Gastrocnemius medialis (tissue), 4 donors: ENCODE measurements at regions of chr17 and their contacts with region 1.

Region 1: DNA sequence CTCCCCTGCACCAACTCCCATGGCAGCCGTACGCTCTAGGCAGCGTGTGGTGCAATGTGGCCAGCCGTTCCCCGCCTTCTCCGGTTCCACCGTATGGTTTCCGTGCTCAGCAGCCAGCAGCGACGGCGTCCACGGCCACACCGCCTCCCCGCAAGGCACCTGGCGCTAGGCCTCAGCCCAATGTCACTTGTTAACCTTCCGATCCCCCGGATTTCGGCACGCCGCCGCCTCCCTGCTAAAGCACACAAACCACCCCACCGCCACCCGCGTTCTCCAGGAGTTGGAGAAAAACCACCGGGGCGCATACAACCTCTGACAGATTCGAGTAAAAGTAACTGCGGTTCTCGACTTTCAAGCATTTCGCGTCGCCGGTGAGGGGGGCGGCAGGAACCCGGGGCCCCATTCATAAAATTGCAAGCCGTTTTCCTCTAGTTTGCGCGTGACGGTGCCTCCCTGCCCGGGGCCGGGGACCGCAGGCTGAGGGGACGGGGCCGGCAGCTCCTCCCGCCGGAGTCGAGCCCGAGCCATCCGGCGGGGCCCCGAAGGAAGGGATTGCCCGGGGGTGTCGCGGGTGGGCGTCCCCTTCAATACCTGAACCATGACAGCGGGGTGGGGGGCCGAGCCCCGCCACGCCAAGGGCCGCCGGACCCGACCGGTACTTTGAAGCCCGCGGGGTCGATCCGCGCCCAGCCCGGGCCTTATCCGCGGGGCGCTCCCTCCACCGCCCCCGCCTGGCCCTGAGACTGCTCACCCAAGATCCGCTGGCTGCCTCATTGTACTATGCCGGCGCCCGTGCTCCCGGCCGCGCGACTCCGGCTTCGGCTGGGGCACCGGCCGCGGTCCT is at the start of gene TEX2:
- DNase-seq: peak; percentile 70 to 88
- ATAC-seq: peak; percentile 61 to 66
- H3K4me3 ChIP-seq: peak within 1 kb of the TSS; percentile 90 to 99 (median 96)
- H3K27ac ChIP-seq: peak within 1 kb of the TSS; percentile 96 to 100 (median 98)
- H3K4me1 ChIP-seq: peaks cover 55 to 58% of the 10 kb centered on the region in 2 donors
- H3K27me3 ChIP-seq: no peaks in the 10 kb centered on the region
- CTCF ChIP-seq: no peak
- POLR2A ChIP-seq: peak; percentile 92
- total RNA-seq, gene TEX2: 39.0 to 91.1 (median 77.4) TPM

Region 2: DNA sequence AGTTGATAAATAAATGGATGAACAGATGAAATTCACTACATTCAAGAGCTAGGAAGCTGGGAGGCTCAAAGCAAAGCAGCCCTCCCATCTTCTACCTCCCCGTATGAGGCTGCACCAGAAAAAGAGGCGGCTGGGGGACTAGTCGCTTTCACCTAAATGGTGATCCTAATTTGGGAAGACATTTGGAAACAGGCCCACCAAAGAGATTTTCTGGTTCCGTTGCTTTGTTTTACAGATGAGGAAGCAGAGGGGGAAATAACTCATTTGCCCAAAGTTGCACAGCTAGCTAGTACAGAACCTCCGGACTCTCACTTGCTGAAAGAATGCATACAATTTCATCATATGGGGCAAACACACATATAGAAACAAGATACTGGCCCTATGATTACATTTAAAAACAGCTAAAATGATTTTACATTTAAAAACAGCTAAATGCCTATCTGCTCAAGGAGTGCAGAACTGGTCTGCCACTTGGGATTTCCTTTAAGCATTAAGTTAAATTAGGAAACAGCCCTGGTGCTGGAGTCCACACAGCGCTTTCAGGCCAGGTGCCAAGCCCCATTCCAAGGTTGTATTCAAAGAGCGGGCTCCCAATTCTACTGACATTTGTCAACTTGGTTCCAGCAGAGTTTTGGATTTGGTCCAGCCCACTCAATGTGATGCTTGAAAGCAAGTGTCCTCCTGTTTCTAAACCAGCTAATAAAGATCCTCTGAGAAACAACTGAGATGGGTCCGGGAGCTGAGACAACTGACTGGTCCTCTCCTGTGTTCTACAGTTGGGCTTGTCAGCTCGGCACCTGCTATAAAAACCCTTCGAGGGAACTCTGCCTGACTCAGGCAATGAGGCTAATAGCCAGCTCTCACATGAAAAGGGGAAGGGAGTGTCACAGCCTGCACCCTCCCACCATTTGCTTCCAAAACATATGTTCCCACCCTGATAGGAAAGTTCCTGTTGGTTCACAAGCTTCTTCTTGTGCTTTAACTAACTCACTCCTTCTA is 144.4 kb before region 1 on chr17:
- in situ Hi-C with region 1: no loop called
- intact Hi-C with region 1: no loop called
- DNase-seq: peak in 1 of 2 donors; percentile 33
- ATAC-seq: peak in 1 of 2 donors; percentile 30
- H3K4me3 ChIP-seq: no peak overlapping the region
- H3K27ac ChIP-seq: peak overlapping the region in 3 of 4 donors; percentile 19 to 53 (median 32)
- H3K4me1 ChIP-seq: peaks cover 27 to 31% of the 10 kb centered on the region in 2 donors
- H3K27me3 ChIP-seq: no peaks in the 10 kb centered on the region
- CTCF ChIP-seq: no peak
- POLR2A ChIP-seq: no peak

Region 3: GRCh38 chr17:64216338-64217248 is 46.0 kb before region 1 on chr17:
- in situ Hi-C with region 1: no loop called
- intact Hi-C with region 1: loop called (anchors 5 kb)
- DNase-seq: peak in 1 of 2 donors; percentile 75
- ATAC-seq: peak; percentile 75 to 80
- H3K4me3 ChIP-seq: peak overlapping the region in 1 of 4 donors; percentile 2
- H3K27ac ChIP-seq: peak overlapping the region; percentile 80 to 90 (median 86)
- H3K4me1 ChIP-seq: peaks cover 30 to 70% of the 10 kb centered on the region in 2 donors
- H3K27me3 ChIP-seq: no peaks in the 10 kb centered on the region
- CTCF ChIP-seq: peak in 2 of 5 experiments; percentile 27 to 30
- POLR2A ChIP-seq: no peak